Activated naive CD4-positive, alpha-beta T cell treated with anti-CD3 and anti-CD28 coated beads, Interleukin-2, amount 10 ng/mL, durations not matched to agents 7 days and 5 days (primary cell): ENCODE measurements at regions of chr12 and their contacts with region 1.

Region 1: GRCh38 chr12:93502802-93503623 is 35.7 kb downstream of the MRPL42 start:
- DNase-seq: peak; percentile 79
- H3K4me3 Mint-ChIP-seq: no peak overlapping the region
- H3K27ac Mint-ChIP-seq: no peak overlapping the region
- H3K4me1 Mint-ChIP-seq: peaks cover 34% of the 10 kb centered on the region
- H3K27me3 Mint-ChIP-seq: no peaks in the 10 kb centered on the region

Region 2: DNA sequence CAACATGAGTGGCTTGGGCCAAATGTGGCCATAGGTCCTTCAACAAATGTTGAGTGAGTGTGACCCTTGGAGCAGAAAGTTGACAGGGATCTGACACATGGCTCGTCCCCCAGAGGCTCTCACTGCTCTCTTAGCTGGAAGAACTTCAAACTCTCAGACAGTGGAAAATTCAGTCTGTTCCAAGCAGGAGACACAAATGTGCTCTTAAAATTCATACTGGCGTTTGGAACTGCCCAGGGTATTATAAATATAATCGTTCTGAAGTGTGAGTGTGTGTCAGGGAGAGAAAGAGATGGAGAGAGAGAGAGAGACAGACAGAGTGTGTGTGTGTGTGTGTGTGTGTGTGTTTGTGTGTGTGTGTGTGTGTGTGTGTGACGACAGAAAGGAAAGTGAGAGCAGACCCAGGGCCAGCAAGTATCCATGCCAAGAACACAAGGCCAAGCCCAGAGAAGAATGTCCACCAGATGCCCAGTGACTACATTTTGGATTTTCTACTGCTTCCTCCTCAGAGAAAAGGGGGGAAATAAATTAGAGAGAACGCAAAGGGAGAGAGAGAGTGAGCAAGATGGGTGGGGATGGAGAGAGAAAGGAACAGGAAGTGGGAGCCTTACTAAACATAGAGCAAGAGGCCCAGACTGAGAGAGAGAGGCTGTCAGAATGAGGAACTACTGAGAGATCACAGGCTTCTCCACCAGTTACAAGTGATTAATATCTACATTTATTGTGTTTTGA is 318.9 kb before region 1 on chr12:
- CTCF ChIA-PET with region 1: no interaction called
- DNase-seq: peak; percentile 26
- H3K4me3 Mint-ChIP-seq: no peak overlapping the region
- H3K27ac Mint-ChIP-seq: peak overlapping the region; percentile 49
- H3K4me1 Mint-ChIP-seq: peaks cover 21% of the 10 kb centered on the region
- H3K27me3 Mint-ChIP-seq: peaks cover 5% of the 10 kb centered on the region

Region 3: GRCh38 chr12:93563807-93564538 is 61.0 kb after region 1 on chr12:
- CTCF ChIA-PET with region 1: interaction called, 44 read pairs
- DNase-seq: peak; percentile 54
- H3K4me3 Mint-ChIP-seq: no peak overlapping the region
- H3K27ac Mint-ChIP-seq: no peak overlapping the region
- H3K4me1 Mint-ChIP-seq: peaks cover 27% of the 10 kb centered on the region
- H3K27me3 Mint-ChIP-seq: no peaks in the 10 kb centered on the region

Region 4: DNA sequence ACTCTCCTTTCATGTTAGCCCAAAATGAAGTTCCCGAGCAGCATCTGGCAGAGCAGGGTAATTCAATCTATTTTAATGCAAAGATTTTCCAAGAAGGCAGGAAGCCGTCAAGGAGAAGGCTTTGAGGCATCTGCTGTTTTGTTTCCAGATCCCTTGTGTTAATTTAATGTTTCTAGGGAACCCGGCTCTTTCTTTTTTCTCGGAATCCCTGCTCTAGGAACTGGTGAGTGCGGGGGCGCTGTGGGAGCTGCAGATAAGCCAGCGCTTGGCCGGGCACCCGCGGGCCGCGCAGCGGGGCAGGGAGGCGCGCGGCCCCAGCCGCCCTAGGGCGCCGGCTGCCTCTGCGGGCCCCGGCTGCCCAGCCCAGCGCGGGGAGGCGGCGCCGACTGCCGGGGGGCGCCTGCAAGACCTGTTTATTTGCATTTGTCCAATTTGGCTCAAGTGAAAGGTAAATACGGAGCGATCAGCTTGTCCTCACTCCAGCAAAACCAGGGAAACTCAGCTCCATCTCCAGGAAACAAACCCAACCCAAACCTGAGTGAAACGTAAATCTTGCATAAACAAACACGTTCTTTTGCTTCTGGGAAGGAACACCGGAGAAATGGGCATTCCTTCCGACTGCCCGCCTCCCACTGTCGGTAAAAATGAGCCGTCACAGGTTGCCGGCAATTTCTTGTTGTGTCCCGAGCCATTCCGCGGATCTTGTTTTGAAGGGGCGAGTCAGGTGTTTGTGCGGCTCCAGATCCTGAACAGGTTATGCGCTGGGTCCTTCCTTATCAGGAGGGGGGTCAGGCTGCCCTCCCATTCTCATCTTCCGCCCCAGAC is 239.3 kb after region 1 on chr12:
- CTCF ChIA-PET with region 1: interaction called, 12 read pairs
- DNase-seq: peak; percentile 82
- H3K4me3 Mint-ChIP-seq: peak overlapping the region; percentile 87
- H3K27ac Mint-ChIP-seq: peak overlapping the region; percentile 98
- H3K4me1 Mint-ChIP-seq: peaks cover 65% of the 10 kb centered on the region
- H3K27me3 Mint-ChIP-seq: peaks cover 10% of the 10 kb centered on the region

Region 5: DNA sequence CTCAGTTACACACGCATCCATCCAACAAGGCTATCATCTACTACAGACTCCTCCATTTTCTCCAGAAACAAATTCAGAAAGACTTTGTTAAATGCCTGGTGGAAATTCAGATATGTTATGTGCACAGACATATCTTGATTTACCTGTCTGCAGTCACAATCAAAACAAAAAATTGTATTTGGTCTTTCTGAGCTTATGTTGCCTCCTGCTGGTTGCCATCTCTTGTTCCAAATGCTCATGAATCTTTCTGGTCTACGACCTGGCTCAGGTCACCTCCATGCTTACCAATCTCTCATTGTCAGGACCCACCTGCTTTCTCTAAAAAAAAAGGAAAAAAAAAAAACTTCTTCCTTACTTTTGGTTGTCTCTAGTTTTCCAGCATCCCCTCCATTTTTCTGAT is 476.2 kb after region 1 on chr12:
- CTCF ChIA-PET with region 1: interaction called, 12 read pairs
- DNase-seq: peak; percentile 62
- H3K4me3 Mint-ChIP-seq: no peak overlapping the region
- H3K27ac Mint-ChIP-seq: no peak overlapping the region
- H3K4me1 Mint-ChIP-seq: peaks cover 47% of the 10 kb centered on the region
- H3K27me3 Mint-ChIP-seq: peaks cover 19% of the 10 kb centered on the region